Activated CD8-positive, alpha-beta T cell treated with anti-CD3 and anti-CD28 coated beads for 36 hours (primary cell): ENCODE measurements at regions of chr6 and their contacts with region 1.

Region 1: GRCh38 chr6:119565893-119566292 is 216.3 kb upstream of the MAN1A1 start:
- DNase-seq: no peak
- ATAC-seq: no peak
- H3K4me3 Mint-ChIP-seq: no peak overlapping the region
- H3K27ac Mint-ChIP-seq: no peak overlapping the region
- H3K4me1 Mint-ChIP-seq: no peaks in the 10 kb centered on the region
- H3K27me3 Mint-ChIP-seq: no peaks in the 10 kb centered on the region
- CTCF ChIP-seq: no peak

Region 2: GRCh38 chr6:119620846-119621555 is 55.1 kb after region 1 on chr6:
- CTCF ChIA-PET with region 1: no interaction called
- POLR2A ChIA-PET with region 1: no interaction called
- intact Hi-C with region 1: loop called (anchors 2 kb)
- DNase-seq: no peak
- ATAC-seq: no peak
- H3K4me3 Mint-ChIP-seq: no peak overlapping the region
- H3K27ac Mint-ChIP-seq: no peak overlapping the region
- H3K4me1 Mint-ChIP-seq: no peaks in the 10 kb centered on the region
- H3K27me3 Mint-ChIP-seq: no peaks in the 10 kb centered on the region
- CTCF ChIP-seq: no peak